GM10248 (cell line): ENCODE measurements at regions of chr9 and their contacts with region 1.

Region 1: GRCh38 chr9:89602978-89603766 is 1.6 kb upstream of the GADD45G start:
- DNase-seq: peak; percentile 81
- CTCF ChIP-seq: peak; percentile 93

Region 2: GRCh38 chr9:89527084-89527483 is 76.1 kb before region 1 on chr9:
- CTCF ChIA-PET with region 1: no interaction called
- POLR2A ChIA-PET with region 1: no interaction called
- DNase-seq: no peak
- CTCF ChIP-seq: no peak

Region 3: DNA sequence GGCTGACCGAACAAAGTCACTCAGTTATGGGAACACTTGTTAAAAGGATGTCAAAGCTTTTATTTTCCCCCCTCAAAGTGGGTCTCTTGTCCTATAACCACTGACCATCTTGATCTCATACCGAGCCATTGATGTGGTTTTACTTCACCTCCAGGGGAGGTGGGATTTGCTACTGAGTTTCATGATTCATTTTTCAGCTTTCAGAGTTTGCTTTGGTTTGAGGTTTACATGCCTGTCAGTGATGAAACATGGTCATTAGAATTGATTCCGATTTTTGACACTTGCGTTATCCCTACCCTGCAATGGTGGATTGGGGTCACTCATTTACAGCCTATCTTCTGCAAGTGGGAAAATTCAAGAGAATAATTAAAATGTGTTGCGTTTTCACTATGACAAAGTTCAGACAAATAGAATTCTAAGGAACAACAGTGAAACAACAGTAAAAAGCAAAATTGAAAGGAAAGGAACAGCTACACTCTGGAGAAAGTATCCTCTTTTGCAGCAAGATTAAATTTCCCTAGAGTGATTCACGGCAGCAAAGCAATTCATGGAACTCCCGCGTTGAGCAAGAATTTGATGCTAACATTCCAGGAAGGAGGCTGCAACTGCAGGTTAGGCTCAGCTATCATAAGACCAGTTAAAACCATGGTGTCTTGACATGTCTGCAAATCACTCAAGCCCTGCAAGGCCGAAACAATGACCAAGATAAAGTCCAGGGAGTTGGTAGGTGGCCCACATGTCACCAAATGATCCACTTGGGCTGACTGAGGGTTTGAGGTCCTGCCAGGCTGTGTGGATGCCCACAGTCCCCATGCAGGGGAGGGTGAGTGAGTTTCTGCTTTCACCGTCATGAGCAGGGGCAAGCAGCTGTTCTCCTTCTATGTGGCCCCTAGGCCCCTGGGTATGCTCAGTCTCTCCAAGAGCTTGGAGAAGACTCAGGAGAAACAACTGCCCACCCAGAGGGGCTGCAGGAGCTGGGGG is 11.0 kb after region 1 on chr9:
- CTCF ChIA-PET with region 1: interaction called, 27 read pairs
- POLR2A ChIA-PET with region 1: interaction called, 3 read pairs
- DNase-seq: no peak
- CTCF ChIP-seq: no peak

Region 4: GRCh38 chr9:89743573-89744361 is 140.6 kb after region 1 on chr9:
- CTCF ChIA-PET with region 1: interaction called, 11 read pairs
- POLR2A ChIA-PET with region 1: no interaction called
- DNase-seq: peak; percentile 65
- CTCF ChIP-seq: no peak

Region 5: GRCh38 chr9:89992306-89993198 is 389.4 kb after region 1 on chr9:
- CTCF ChIA-PET with region 1: interaction called, 10 read pairs
- POLR2A ChIA-PET with region 1: no interaction called
- DNase-seq: no peak
- CTCF ChIP-seq: no peak

Region 6: DNA sequence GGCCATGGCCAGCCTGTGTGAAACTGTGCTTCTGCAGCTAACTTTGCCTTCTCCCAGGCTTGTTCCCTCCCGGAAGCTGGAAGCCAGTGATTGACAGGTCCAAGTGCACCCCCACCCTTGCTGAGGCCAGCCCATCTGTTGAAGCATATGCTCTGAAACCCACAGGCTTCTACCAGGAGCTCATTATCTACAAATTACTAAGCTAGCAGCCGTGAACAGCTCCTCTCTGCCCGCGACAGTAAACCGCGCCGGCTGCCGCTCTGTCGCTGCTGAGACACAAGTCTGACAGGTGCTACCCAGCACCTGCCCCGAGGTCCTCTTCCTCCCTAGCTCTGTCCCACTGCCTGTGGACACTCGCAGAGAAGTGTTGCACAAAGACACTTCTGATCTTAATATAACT is 492.5 kb after region 1 on chr9:
- CTCF ChIA-PET with region 1: interaction called, 298 read pairs
- POLR2A ChIA-PET with region 1: interaction called, 5 read pairs
- DNase-seq: no peak
- CTCF ChIP-seq: no peak

Region 7: GRCh38 chr9:90121762-90122161 is 518.6 kb after region 1 on chr9:
- CTCF ChIA-PET with region 1: interaction called, 12 read pairs
- POLR2A ChIA-PET with region 1: no interaction called
- DNase-seq: no peak
- CTCF ChIP-seq: no peak